Sigmoid colon (tissue), 7 donors: ENCODE measurements at regions of chr1 and their contacts with region 1.

Region 1: DNA sequence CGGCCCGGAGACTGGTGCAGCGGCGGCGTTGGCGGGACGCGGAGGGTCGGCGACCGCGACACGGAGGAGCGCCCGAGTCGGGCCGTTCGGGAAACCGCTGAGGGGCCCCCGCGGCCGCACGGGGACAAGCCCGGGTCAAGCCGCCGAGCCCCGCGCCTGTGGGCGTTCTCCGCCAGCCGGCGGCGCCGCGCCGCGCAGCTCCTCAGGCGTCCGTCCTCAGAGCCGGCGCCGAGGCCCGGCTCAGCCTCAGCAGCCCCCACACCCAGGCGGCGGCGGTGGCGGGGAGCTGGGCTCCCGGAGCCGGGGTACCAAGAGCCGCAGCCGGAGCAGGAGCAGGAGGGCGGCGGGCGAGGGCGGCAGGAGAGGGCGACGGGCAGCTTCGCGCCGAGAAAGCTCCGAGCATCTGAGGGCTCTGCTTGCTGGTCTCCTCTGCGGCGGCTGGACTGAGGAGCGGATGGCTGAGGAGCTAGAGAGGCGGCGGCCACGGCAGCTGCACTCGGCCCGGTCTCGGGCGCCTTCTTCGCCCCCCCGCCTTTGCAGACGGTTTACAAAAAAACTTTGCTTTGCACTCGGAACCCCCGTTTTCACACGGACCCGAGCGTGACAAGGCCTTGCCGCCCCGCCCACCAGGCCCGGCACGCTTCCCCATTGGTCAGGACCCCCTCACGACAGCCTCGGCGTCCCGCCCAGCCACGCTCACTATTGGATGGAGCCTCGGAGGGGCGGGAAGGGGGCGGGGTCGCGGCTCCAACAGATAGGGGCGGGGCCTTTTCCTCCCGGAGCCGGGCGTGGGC is at the start of gene SLC30A1:
- DNase-seq: peak; percentile 100
- H3K4me3 ChIP-seq: peak within 1 kb of the TSS; percentile 76 to 96 (median 94)
- H3K27ac ChIP-seq: peak within 1 kb of the TSS; percentile 96 to 98 (median 98)
- H3K4me1 ChIP-seq: peaks cover 0 to 54% (median 40%) of the 10 kb centered on the region in 4 donors
- H3K27me3 ChIP-seq: no peaks in the 10 kb centered on the region
- CTCF ChIP-seq: no peak
- EP300 ChIP-seq: no peak
- POLR2A ChIP-seq: peak; percentile 88 to 90
- total RNA-seq, gene SLC30A1: 7.9 to 11.8 (median 9.3) TPM

Region 2: GRCh38 chr1:211382714-211383480 is 195.9 kb before region 1 on chr1:
- intact Hi-C with region 1: loop called (anchors 10 kb)
- DNase-seq: peak; percentile 96
- H3K4me3 ChIP-seq: peak overlapping the region; percentile 52 to 73 (median 64)
- H3K27ac ChIP-seq: peak overlapping the region; percentile 83 to 97 (median 90)
- H3K4me1 ChIP-seq: peaks cover 0 to 6% (median 0%) of the 10 kb centered on the region in 4 donors
- H3K27me3 ChIP-seq: no peaks in the 10 kb centered on the region
- CTCF ChIP-seq: no peak
- EP300 ChIP-seq: no peak
- POLR2A ChIP-seq: peak; percentile 82 to 95

Region 3: DNA sequence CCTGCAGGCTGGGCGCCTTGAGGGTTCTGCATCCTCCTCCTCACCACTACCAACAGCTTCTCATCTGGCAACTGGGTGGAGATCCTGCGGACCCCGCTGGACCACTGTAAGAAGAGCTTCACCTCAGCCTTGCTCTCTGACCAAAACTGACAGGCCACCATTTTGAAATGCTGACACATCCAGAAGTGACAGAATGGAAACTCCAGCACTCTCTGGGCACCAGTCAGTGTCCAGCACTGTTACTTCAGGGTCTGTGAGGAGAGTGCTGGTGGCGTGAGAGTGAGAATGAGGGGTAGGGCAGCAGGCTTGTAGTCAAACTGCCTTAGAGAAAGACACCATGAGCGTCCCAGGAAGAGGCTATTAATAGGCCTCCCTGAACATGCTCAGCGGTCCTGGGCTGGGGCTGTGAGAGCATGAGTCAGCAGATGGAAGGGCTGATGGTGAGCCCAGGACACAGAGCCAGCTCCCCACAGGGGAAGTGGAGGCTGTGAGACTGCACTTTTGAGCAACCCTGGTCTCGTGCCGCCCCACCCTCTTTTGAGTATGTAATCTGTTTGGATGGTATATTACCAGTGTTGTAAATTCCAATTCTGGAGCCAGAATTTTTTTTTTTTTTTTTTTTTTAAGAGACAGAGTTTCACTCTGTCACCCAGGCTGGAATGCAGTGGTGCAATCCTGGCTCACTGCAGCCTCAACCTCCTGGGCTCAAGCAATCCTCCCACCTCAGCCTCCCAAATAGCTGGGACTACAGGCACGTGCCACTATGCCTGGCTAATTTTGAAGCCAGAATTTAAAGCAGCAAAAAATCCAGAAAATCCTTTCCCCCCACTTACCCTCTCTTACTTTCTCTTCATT is 34.5 kb after region 1 on chr1:
- intact Hi-C with region 1: loop called (anchors 2 kb)
- DNase-seq: peak; percentile 95
- H3K4me3 ChIP-seq: no peak overlapping the region
- H3K27ac ChIP-seq: peak overlapping the region; percentile 41 to 78 (median 70)
- H3K4me1 ChIP-seq: peaks cover 0 to 39% (median 31%) of the 10 kb centered on the region in 4 donors
- H3K27me3 ChIP-seq: no peaks in the 10 kb centered on the region
- CTCF ChIP-seq: no peak
- EP300 ChIP-seq: peak in 1 of 4 donors; percentile 48
- POLR2A ChIP-seq: no peak

Region 4: GRCh38 chr1:211830330-211831142 is 251.7 kb after region 1 on chr1 and contains the start of gene LPGAT1:
- intact Hi-C with region 1: loop called (anchors 5 kb)
- DNase-seq: peak; percentile 84
- H3K4me3 ChIP-seq: peak within 1 kb of the TSS; percentile 45 to 97 (median 92)
- H3K27ac ChIP-seq: peak within 1 kb of the TSS; percentile 83 to 92 (median 90)
- H3K4me1 ChIP-seq: peaks cover 0 to 44% (median 34%) of the 10 kb centered on the region in 4 donors
- H3K27me3 ChIP-seq: no peaks in the 10 kb centered on the region
- CTCF ChIP-seq: peak in 3 of 4 experiments; percentile 26 to 75 (median 32)
- EP300 ChIP-seq: no peak
- POLR2A ChIP-seq: no peak
- total RNA-seq, gene LPGAT1: 26.8 to 46.7 (median 37.4) TPM

Region 5: DNA sequence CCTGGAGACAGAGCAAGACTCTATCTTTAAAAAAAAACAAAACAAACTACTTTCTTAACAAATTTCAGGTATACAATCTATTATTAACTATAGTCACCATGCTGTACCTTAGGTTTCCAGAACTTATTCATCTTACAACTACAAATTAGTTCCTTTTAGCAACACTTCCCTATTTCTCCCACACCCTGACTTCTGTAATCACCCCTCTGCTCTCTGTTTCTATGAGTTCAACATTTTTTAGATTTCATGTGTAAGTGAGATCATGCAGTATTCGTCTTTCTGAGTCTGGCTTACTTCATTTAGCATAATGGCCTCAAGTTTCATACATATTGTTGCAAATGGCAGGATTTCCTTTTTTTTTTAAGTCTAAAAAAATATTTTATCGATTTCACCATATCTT is 329.6 kb after region 1 on chr1:
- intact Hi-C with region 1: no loop called
- DNase-seq: no peak
- H3K4me3 ChIP-seq: no peak overlapping the region
- H3K27ac ChIP-seq: no peak overlapping the region
- H3K4me1 ChIP-seq: no peaks in the 10 kb centered on the region
- H3K27me3 ChIP-seq: no peaks in the 10 kb centered on the region
- CTCF ChIP-seq: no peak
- EP300 ChIP-seq: no peak
- POLR2A ChIP-seq: no peak